ENCODE measurements at regions of chr4 and their contacts with region 1.

Region 1: GRCh38 chr4:71713611-71714203 is 70.2 kb downstream of the GC start:
- DNase-seq: no peak
- H3K4me3 ChIP-seq: no peak overlapping the region
- H3K27ac ChIP-seq: no peak overlapping the region
- H3K4me1 ChIP-seq: no peaks in the 10 kb centered on the region
- H3K27me3 ChIP-seq: no peaks in the 10 kb centered on the region
- CTCF ChIP-seq: peak; percentile 20 to 74 (median 57)
- POLR2A ChIP-seq: no peak

Region 2: DNA sequence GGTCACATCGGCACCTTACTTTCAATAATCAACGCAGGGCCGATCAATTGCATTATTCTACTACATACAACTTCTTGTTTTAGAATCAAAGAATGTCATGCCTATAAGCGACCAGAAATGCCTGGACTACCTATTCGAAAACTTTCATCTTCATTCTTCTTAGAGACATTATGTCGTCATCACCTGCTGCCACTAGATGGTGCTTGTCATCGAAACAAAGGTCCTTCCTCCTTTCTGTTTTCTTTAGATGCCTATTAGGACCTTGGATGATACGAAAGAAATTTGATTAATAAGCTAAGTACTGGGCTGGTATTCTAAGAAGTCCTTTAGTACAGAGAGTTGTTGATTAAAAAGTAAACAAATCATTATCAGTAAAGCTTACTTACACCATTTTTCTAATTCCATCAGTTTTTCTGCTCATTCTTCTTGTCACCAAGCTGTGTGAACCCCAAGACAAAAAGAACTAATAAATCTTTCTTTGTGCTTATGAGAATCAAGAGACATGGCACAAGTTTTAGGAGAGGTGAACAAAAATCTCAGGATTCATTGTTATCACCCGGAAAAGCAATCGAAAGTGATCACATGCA is 529.4 kb before region 1 on chr4:
- intact Hi-C with region 1: loop called (anchors 10 kb)
- DNase-seq: no peak
- H3K4me3 ChIP-seq: no peak overlapping the region
- H3K27ac ChIP-seq: no peak overlapping the region
- H3K4me1 ChIP-seq: peaks cover 0 to 39% (median 0%) of the 10 kb centered on the region in 3 donors
- H3K27me3 ChIP-seq: peaks cover 0 to 24% (median 0%) of the 10 kb centered on the region in 4 donors
- CTCF ChIP-seq: peak in 5 of 6 experiments; percentile 48 to 61 (median 52)
- POLR2A ChIP-seq: no peak

Measured in esophagus squamous epithelium (tissue), 5 donors.